ENCODE measurements at regions of chr19 and their contacts with region 1.

Region 1: GRCh38 chr19:29671393-29672160 is 6.3 kb downstream of the PLEKHF1 start:
- DNase-seq: peak; percentile 62 to 81 (median 66)
- ATAC-seq: peak; percentile 86
- H3K4me3 ChIP-seq: no peak overlapping the region
- H3K27ac ChIP-seq: peak overlapping the region; percentile 53; the same call in 2 of the 3 replicates
- H3K4me1 ChIP-seq: peaks cover 23 to 53% of the 10 kb centered on the region in 2 experiments
- H3K27me3 ChIP-seq: no peaks in the 10 kb centered on the region
- CTCF ChIP-seq: peak; percentile 39 to 54 (median 50)
- EP300 ChIP-seq: 0 out of 2 replicates have a peak, but pooled peaks have one; percentile 5
- POLR2A ChIP-seq: no peak
- RAD21 ChIP-seq: no peak

Region 2: DNA sequence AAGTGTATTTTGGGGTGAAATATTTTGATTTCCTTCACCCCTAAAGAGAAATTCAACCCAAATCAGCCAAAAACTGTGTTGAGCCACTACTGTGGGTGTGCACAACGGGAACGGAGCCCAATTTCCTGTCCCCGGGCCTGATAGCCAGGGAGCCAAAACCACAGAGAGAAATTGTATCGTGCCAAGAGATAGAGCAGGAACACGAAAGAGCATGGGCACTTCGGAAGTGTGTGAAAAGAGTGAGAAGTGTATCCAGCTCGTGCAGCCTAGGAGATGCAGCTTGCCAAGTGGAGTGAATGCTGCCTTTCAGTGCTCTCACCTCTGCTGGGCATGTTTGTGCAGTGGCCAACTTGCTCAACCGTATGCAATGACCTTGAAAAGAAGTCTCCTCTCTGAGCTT is 25.7 kb before region 1 on chr19:
- CTCF ChIA-PET with region 1: no interaction called
- POLR2A ChIA-PET with region 1: no interaction called
- in situ Hi-C with region 1: no loop called
- intact Hi-C with region 1: no loop called
- DNase-seq: peak in 1 of 4 experiments; percentile 52
- ATAC-seq: peak; percentile 83
- H3K4me3 ChIP-seq: no peak overlapping the region
- H3K27ac ChIP-seq: 0 out of 3 replicates have a peak overlapping the region, but pooled peaks have one; percentile 5
- H3K4me1 ChIP-seq: peaks cover 0 to 19% of the 10 kb centered on the region in 2 experiments; a peak in 4 of 5 replicates
- H3K27me3 ChIP-seq: no peaks in the 10 kb centered on the region
- CTCF ChIP-seq: no peak
- EP300 ChIP-seq: no peak
- POLR2A ChIP-seq: no peak
- RAD21 ChIP-seq: no peak

Region 3: GRCh38 chr19:29681422-29682235 is 10.1 kb after region 1 on chr19:
- CTCF ChIA-PET with region 1: no interaction called
- POLR2A ChIA-PET with region 1: interaction called, 13 read pairs
- in situ Hi-C with region 1: no loop called
- intact Hi-C with region 1: no loop called
- DNase-seq: no peak
- ATAC-seq: no peak
- H3K4me3 ChIP-seq: no peak overlapping the region
- H3K27ac ChIP-seq: no peak overlapping the region
- H3K4me1 ChIP-seq: peaks cover 3 to 26% of the 10 kb centered on the region in 2 experiments; a peak in 3 of 5 replicates
- H3K27me3 ChIP-seq: no peaks in the 10 kb centered on the region
- CTCF ChIP-seq: no peak
- EP300 ChIP-seq: no peak
- POLR2A ChIP-seq: no peak
- RAD21 ChIP-seq: no peak

Region 4: DNA sequence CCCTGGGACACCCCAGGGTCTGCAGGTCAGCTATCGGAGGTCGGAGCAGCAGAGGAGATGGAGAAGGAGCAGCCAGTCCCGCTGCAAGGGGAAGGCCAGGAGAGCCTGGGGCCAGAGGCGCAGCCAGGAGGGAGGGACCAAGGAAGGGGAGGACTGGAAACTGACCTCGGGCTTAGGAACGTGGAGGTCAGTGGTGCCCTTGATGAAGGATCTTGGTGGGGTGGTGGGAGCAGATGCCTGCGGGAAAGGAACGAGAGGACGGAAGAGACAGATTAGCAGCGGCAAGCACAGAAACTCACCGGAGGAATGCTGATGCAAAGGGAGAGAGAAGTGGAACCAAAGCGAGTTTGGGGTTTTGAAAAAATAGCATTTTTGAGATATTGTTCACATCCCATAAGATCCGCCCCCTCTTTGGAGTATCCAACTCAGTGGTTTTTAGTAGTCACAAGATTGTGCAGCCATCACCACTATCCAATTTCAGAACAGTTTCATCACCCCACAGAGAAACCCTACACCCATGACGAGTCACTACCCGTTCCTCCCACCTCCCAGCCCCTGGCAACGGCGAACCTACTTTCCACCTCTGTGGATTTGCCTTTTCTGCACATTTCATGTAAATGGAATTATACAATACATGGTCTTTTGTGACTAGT is 15.8 kb after region 1 on chr19:
- CTCF ChIA-PET with region 1: interaction called, 3 read pairs
- POLR2A ChIA-PET with region 1: interaction called, 13 read pairs
- in situ Hi-C with region 1: no loop called
- intact Hi-C with region 1: loop called (anchors 2 kb)
- DNase-seq: peak in 2 of 4 experiments; percentile 45 to 72
- ATAC-seq: peak; percentile 88
- H3K4me3 ChIP-seq: no peak overlapping the region; the same call in 1 of the 2 replicates
- H3K27ac ChIP-seq: peak overlapping the region; percentile 79
- H3K4me1 ChIP-seq: peaks cover 13 to 29% of the 10 kb centered on the region in 2 experiments; a peak in 4 of 5 replicates
- H3K27me3 ChIP-seq: no peaks in the 10 kb centered on the region
- CTCF ChIP-seq: no peak
- EP300 ChIP-seq: peak; percentile 92
- POLR2A ChIP-seq: 0 out of 2 replicates have a peak, but pooled peaks have one; percentile 17
- RAD21 ChIP-seq: no peak

Region 5: DNA sequence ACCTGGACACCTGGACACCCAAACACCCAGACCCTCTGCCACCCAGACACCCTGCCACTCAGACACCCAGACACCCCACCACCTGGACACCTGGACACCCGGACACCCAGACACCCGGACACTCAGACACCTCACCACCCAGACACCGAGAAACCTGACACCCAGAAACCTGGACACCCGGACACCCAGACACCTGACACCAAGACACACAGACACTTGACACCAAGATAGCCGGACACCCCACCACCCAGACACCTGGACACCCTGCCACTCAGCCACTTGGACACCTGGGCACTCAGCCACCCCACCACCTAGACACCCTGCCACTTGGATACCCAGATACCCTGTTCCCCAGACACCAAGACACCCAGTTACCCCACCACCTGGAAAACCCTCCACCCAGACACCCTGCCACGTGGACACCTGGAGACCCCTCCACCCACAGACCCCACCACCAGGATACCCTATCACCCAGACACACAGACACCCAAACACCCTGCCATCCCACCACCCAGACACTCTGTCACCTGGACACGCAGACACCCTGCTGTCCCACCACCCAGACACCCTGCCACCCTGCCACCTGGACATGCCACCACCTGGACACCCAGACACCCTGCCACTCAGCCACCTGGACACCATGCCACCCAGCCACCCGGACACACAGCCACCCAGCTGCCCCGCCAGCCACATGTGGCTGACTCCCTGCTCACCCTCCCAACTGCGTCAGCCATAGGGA is 26.1 kb after region 1 on chr19:
- CTCF ChIA-PET with region 1: no interaction called
- POLR2A ChIA-PET with region 1: no interaction called
- in situ Hi-C with region 1: no loop called
- intact Hi-C with region 1: no loop called
- DNase-seq: no peak
- ATAC-seq: no peak
- H3K4me3 ChIP-seq: no peak overlapping the region
- H3K27ac ChIP-seq: no peak overlapping the region
- H3K4me1 ChIP-seq: peaks cover 0 to 14% of the 10 kb centered on the region in 2 experiments; a peak in 2 of 5 replicates
- H3K27me3 ChIP-seq: no peaks in the 10 kb centered on the region
- CTCF ChIP-seq: no peak
- EP300 ChIP-seq: no peak
- POLR2A ChIP-seq: no peak
- RAD21 ChIP-seq: no peak

Region 6: GRCh38 chr19:29724102-29724641 is 52.6 kb after region 1 on chr19:
- CTCF ChIA-PET with region 1: no interaction called
- POLR2A ChIA-PET with region 1: no interaction called
- in situ Hi-C with region 1: no loop called
- intact Hi-C with region 1: no loop called
- DNase-seq: peak in 2 of 4 experiments; percentile 23
- ATAC-seq: no peak; the same call in 2 of the 3 replicates
- H3K4me3 ChIP-seq: no peak overlapping the region
- H3K27ac ChIP-seq: no peak overlapping the region
- H3K4me1 ChIP-seq: peaks cover 0 to 9% of the 10 kb centered on the region in 2 experiments; a peak in 2 of 5 replicates
- H3K27me3 ChIP-seq: peaks cover 44 to 56% of the 10 kb centered on the region in 2 experiments
- CTCF ChIP-seq: no peak
- EP300 ChIP-seq: no peak
- POLR2A ChIP-seq: no peak
- RAD21 ChIP-seq: no peak

Measured in K562 (cell line).